RWPE1 (cell line): ENCODE measurements at regions of chr1 and their contacts with region 1.

Region 1: DNA sequence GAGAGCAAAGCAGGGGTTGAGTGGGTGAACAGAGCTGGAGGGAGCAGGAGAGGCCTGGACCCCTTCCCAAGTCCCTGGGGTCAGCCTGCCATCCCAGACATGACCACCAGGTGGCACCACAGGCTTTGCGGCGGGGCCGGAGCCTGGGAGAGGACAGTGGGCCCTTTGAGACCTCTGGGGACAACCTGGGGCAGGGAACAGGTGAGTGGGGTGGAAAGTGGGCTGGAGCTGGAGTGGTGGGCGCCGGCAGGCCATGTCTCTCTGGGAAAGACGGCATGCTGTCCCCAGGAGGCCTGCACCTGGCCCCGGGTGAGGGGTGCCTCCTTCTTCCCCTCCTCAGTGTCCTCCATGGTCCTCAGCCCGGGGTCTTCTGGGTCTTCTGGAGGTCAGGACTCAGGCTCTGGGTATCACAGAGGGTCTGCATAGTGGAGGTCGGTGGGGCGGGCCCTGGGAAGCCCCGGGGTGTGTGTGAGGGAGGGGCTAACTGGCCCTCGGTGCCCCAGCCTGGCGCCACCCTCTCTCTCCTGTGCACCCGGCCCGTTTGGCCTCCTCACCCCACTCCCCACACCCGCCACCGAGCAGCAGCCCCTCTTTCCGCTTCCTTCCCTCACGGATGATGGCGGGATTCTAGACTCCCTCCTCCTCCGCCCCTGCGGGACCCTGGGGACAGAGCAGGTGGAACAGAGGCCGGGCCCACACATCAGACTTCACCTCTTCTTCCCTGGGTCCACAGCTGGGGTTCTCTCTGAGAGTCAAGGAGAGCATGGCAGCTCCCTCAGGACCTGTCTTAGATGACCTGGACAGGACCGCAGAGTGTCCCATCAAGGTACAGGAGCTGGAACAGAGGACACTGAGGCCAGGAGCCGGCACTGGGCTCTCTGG is 28.4 kb upstream of the PKP1 start:
- DNase-seq: peak; percentile 91
- H3K27ac ChIP-seq: peak overlapping the region; percentile 69
- CTCF ChIP-seq: peak; percentile 97

Region 2: DNA sequence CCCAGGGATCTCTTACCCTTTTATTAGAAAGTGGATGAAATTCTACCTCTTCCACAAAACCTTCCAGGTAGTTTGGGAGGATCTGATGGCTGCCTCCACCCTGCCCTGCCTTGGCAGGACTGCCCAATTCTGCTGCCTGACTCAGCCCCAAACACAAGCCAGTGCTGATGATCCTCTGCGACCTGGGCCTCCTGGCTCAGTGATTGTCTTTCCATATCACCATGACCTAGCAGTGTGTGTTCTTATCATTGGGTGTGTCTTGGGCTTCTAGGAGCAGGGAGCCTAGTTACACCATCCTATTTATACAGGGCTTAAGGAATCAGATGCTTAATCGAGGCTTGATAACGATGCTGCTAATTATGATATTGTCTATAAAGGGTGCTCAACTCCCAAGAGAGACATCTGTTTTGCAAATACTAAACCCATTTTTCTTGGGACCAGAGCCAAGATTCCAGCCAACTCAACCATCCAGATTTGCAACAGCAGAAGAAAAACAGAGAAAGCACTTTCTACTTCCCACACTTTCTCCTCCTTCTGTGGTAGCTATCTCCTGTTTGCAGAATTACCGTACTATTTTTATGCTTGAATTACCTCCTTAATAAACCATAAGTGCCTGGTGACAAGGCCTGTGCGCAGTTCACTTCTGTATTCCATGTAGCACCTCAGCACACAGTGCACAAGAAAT is 194.9 kb before region 1 on chr1:
- CTCF ChIA-PET with region 1: no interaction called
- POLR2A ChIA-PET with region 1: no interaction called
- DNase-seq: no peak
- H3K27ac ChIP-seq: no peak overlapping the region
- CTCF ChIP-seq: no peak

Region 3: DNA sequence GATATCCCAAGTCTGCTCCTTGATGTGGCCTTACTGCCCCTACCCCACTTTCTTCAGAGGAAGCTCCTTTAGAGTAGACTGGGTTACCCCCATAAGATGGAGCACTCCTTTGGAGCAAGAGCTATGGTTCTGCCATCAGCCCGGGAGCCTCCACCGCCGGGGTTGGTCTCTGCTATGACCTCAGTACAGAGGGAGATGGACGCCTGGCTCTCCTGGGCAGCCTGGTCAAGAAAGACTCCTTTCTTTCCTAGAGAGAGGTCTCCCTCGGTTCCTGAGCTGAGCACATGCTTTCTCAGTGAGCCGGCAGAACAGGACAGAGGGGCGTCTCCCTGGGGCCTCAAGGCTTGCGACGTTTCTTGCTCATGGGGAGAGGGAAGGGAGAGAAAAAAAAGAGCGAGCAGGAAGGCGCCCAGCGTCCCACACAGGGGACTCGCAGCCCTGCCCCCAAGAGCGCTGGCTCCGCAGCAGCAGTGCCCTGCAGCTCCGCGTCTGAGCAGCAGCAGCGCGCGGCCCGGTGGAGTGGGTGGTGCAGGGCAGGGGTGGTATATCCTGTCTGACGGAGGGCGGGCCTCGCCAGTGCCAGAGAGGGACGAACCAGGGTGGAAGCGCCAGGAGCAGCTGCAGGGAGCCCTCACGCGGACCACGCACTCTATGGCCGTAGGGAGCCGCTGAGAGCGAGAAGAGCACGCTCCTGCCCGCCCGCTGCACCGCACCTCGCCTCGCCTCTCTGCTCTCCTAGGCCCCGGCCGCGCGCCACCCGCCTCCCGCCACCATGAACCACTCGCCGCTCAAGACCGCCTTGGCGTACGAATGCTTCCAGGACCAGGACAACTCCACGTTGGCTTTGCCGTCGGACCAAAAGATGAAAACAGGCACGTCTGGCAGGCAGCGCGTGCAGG is 28.3 kb after region 1 on chr1 and contains the start of gene PKP1:
- CTCF ChIA-PET with region 1: interaction called, 45 read pairs
- POLR2A ChIA-PET with region 1: interaction called, 109 read pairs
- DNase-seq: peak; percentile 90
- H3K27ac ChIP-seq: peak within 1 kb of the TSS; percentile 97
- CTCF ChIP-seq: no peak

Region 4: DNA sequence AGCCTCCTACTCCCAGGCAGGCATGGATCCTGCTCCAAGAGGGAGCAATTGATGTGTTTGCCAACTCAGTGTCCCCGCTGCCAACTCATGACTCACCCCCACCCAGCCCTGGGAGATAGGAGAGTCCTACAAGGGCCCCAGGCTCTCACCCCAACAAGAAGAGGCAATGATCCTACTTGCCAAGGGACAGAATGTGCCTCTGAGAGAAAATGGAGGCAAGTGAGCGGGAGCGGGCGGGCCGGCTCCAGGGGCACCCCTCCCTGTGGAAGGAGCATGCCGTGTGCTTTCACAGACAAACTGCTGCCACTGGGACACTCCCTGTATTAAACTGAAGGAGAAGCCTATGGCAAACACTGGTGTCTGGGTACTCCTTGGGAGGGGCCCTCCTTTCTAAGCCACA is 45.1 kb after region 1 on chr1:
- CTCF ChIA-PET with region 1: interaction called, 11 read pairs
- POLR2A ChIA-PET with region 1: interaction called, 3 read pairs
- DNase-seq: peak; percentile 97
- H3K27ac ChIP-seq: peak overlapping the region; percentile 100
- CTCF ChIP-seq: no peak

Region 5: DNA sequence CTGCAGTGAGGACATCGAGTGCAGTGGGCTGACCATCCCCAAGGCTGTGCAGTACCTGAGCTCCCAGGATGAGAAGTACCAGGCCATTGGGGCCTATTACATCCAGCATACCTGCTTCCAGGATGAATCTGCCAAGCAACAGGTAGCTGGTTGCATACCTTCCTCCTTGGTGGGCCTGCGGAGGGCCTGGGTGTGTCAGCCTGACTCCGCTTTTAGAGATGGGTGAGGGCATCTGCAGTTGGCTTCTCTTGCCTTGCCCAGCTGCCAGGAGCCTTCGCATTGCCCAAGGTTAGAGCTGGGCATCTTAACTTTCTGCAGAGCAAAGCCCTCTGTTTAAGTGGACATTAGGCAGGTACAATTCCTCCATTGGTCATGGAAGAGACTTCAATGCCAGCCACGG is 61.7 kb after region 1 on chr1:
- CTCF ChIA-PET with region 1: interaction called, 46 read pairs
- POLR2A ChIA-PET with region 1: no interaction called
- DNase-seq: no peak
- H3K27ac ChIP-seq: peak overlapping the region; percentile 90
- CTCF ChIP-seq: no peak

Region 6: GRCh38 chr1:201348211-201348566 is 93.3 kb after region 1 on chr1:
- CTCF ChIA-PET with region 1: interaction called, 33 read pairs
- POLR2A ChIA-PET with region 1: interaction called, 3 read pairs
- DNase-seq: peak; percentile 91
- H3K27ac ChIP-seq: no peak overlapping the region
- CTCF ChIP-seq: peak; percentile 49

Region 7: DNA sequence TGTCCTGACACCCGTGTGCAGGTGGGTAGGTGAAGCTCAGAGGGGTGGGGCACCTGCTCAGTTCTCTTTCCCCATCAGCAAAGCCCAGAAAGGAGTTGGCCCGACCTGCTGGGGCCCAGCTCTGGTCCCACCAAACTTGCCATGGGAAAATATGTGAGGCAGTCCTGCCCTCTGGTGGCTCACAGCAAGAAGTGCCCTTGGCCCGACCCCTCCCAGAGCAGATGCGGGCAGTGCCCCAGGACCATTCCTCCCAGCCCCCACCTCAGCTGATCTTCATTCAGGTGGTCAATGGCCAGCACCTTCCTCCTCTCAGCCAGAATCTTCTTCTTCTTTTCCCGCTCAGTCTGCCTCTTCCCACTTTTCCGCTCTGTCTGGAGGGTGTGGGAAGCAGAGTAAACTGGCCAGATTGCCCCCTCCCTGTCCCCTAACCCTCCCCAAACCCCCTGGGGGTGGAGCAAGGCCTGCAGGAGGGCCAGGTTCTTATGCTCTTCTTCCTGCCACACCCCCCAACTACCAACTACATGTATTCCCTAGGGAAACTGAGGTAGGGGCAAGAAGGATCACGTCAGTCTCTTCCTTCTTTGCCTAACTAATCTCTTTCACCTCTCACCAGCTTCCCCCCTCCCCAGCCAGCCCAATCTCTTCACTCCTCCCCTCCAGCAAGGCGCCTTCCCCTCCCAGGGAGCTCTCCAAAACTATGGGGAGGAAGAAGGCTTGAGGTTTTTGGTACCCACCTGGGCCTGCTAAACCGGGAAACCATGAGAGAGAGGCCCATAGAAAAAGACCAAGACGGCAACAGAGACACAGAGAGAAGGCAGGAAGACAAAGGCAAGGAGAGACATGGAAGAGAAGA is 107.0 kb after region 1 on chr1:
- CTCF ChIA-PET with region 1: interaction called, 43 read pairs
- POLR2A ChIA-PET with region 1: no interaction called
- DNase-seq: peak; percentile 95
- H3K27ac ChIP-seq: no peak overlapping the region
- CTCF ChIP-seq: peak; percentile 83

Region 8: GRCh38 chr1:201436393-201436792 is 181.5 kb after region 1 on chr1:
- CTCF ChIA-PET with region 1: no interaction called
- POLR2A ChIA-PET with region 1: no interaction called
- DNase-seq: no peak
- H3K27ac ChIP-seq: no peak overlapping the region
- CTCF ChIP-seq: no peak